ENCODE measurements at regions of chr7 and their contacts with region 1.

Region 1: DNA sequence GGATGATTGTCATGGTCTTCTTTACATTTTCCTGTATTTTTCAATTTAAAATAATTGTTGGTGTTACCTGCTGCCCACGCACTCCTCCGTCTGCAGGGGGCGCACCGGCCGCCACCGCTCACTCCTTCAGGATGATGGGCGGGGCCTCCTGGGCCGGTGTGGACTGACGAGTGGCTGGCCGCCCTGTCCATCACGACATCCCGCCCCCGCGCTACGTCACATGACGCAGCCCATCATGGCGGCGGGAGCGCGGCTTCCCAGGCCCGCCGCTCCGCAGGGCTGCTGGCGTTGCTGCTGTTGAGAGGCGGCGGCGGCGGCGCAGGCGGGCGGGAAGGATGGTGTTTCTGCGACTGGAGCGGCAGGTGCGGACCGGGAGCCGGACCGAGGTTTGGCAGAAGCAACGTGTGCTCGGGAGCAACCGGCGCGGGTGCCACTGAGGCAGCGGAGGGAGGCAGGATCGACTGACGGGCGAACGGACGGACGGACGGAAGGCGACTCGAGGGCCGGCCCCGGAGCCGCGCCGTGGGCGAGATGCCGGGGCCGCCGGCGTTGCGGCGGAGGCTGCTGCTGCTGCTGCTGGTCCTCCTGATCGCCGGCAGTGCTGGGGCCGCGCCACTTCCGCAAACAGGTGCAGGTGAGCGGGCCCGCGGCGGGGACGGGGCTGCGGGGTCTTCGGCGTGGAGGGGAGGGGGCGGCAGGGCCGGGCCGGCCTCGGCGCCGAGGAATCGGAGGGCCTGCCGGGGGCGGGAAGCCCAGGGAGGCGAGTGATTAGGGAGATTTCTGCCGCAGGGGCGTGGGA is at the start of gene LMTK2:
- DNase-seq: peak; percentile 94 to 98 (median 95)
- ATAC-seq: peak; percentile 99 to 100 (median 100)
- H3K4me3 ChIP-seq: peak within 1 kb of the TSS; percentile 78 to 100 (median 94)
- H3K27ac ChIP-seq: peak within 1 kb of the TSS; percentile 60 to 93 (median 86)
- H3K4me1 ChIP-seq: peaks cover 0 to 46% (median 28%) of the 10 kb centered on the region in 12 donors
- H3K27me3 ChIP-seq: no peaks in the 10 kb centered on the region
- CTCF ChIP-seq: peak; percentile 93 to 99 (median 98)
- POLR2A ChIP-seq: peak; percentile 73 to 97
- total RNA-seq, gene LMTK2: 18.8 to 58.3 (median 34.5) TPM

Region 2: DNA sequence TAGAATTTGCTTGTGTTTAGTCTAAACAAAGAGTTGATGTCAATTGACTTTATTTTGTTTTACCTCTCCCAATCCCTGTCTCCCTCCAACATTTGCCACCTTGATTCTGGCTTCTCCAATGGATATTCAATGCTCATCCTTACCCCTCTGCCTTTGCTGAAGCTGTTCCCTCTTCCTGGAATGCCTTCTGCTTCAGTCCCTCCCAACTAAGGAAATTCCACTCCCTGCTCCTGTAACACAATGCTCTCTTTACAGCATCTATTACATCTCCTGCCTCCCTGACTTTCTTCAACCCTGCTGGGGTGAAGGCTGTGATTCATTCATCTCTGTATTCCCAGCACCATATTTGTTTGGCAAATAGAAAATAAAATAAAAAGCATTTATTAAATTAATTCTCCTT is 409.4 kb before region 1 on chr7:
- intact Hi-C with region 1: no loop called
- DNase-seq: no peak
- ATAC-seq: no peak
- H3K4me3 ChIP-seq: no peak overlapping the region
- H3K27ac ChIP-seq: no peak overlapping the region
- H3K4me1 ChIP-seq: no peaks in the 10 kb centered on the region
- H3K27me3 ChIP-seq: no peaks in the 10 kb centered on the region
- CTCF ChIP-seq: no peak
- POLR2A ChIP-seq: no peak

Region 3: GRCh38 chr7:98168181-98168905 is 61.5 kb after region 1 on chr7:
- intact Hi-C with region 1: loop called (anchors 1 to 5 kb)
- DNase-seq: peak in 2 of 5 donors; percentile 44 to 50
- ATAC-seq: peak in 3 of 4 donors; percentile 48 to 68 (median 67)
- H3K4me3 ChIP-seq: no peak overlapping the region
- H3K27ac ChIP-seq: no peak overlapping the region
- H3K4me1 ChIP-seq: peaks cover 0 to 16% (median 5%) of the 10 kb centered on the region in 12 donors
- H3K27me3 ChIP-seq: no peaks in the 10 kb centered on the region
- CTCF ChIP-seq: peak; percentile 57 to 93 (median 84)
- POLR2A ChIP-seq: no peak

Region 4: DNA sequence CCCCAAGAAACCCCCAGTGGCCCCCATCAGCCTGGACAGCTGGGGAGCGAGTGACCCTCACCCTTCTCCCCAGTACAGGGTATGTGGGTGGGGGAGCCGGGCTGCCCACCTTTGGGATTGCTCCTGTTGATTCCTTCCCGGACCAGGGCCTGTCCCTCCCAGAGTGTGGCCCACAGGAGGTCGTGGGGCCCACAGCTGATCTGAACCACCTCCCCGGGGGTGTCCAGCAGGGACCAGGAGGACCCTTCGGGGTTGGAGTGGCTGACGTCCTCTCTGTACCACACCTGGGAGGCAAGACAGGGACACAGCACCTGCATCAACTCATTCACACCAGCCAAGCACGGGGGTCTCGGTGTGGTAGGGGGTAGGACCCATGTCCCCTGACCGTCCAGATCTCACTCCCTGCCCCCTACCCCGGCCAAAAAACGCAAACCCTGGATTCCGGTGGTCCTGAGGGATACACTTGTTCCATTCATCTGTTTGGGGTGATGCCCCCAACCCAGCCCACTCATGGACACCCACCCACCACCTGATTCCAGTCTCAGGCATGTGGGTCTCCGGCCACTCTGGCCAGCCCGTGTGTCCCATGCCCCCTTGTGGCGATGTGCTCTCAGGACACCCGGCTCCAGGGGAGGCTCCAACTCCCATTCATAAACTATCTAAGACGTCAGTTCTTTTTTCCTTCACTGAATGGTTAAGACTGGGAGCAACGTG is 134.3 kb after region 1 on chr7:
- intact Hi-C with region 1: loop called in 1 of 10 experiments (anchors 10 kb)
- DNase-seq: peak in 1 of 5 donors; percentile 56
- ATAC-seq: peak in 3 of 4 donors; percentile 40 to 62 (median 56)
- H3K4me3 ChIP-seq: no peak overlapping the region
- H3K27ac ChIP-seq: no peak overlapping the region
- H3K4me1 ChIP-seq: peaks cover 0 to 12% (median 4%) of the 10 kb centered on the region in 12 donors
- H3K27me3 ChIP-seq: no peaks in the 10 kb centered on the region
- CTCF ChIP-seq: peak; percentile 55 to 80 (median 68)
- POLR2A ChIP-seq: no peak

Region 5: GRCh38 chr7:98520356-98520969 is 413.6 kb after region 1 on chr7:
- intact Hi-C with region 1: no loop called
- DNase-seq: no peak
- ATAC-seq: no peak
- H3K4me3 ChIP-seq: no peak overlapping the region
- H3K27ac ChIP-seq: no peak overlapping the region
- H3K4me1 ChIP-seq: no peaks in the 10 kb centered on the region
- H3K27me3 ChIP-seq: no peaks in the 10 kb centered on the region
- CTCF ChIP-seq: no peak
- POLR2A ChIP-seq: no peak